RWPE1 (cell line): ENCODE measurements at regions of chr7 and their contacts with region 1.

Region 1: DNA sequence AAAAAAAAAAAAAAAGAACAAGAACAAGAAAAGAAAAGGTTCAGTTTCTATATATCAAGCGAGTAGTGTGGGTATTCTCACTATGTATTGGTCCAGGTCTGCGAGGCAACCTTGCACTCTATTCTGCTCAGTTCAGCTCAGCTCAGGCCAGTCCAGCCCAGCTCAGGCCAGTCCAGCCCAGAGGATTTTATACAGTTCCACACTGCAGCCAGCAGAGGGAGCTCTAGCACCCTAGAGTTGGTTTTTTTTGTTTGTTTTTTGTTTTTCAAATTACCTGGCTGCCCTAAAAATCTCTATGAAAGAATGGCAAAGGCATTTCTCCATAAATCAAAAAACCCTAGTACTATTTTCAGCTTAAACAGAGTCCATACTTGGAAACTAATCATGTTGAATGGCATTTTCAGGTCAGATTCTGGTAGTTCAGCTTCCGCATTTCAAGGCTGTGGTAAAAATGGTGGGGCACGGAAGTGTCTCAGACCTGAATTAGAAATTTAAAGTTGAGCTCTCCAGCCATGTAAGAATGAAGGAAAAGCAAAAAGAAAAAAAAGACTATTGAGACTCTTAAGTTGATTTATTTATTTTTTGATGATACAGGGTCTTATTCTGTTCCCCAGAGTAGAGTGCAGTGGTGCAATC is 55.2 kb upstream of the GSDME start:
- DNase-seq: peak; percentile 60
- H3K27ac ChIP-seq: no peak overlapping the region
- CTCF ChIP-seq: peak; percentile 96

Region 2: DNA sequence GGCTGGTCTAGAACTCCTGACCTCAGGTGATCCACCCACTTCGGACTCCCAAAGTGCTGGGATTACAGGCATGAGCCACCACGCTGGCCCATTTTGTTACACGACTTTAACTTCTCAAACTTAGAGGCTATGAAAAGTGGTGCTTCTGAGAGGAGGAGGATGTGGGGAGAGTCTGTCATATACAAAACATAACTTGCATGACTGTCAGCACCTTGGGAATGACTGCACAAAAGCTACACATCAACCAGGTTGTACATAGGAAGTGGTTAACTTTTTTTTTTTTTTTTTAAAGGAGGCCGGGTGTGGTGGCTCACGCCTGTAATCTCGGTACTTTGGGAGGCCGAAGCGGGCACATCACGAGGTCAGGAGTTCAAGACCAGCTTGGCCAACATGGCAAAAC is 11.8 kb before region 1 on chr7:
- CTCF ChIA-PET with region 1: interaction called, 10 read pairs
- POLR2A ChIA-PET with region 1: no interaction called
- DNase-seq: no peak
- H3K27ac ChIP-seq: no peak overlapping the region
- CTCF ChIP-seq: no peak

Region 3: GRCh38 chr7:25069900-25070443 is 257.5 kb after region 1 on chr7:
- CTCF ChIA-PET with region 1: interaction called, 20 read pairs
- POLR2A ChIA-PET with region 1: no interaction called
- DNase-seq: peak; percentile 84
- H3K27ac ChIP-seq: peak overlapping the region; percentile 51
- CTCF ChIP-seq: peak; percentile 93

Region 4: DNA sequence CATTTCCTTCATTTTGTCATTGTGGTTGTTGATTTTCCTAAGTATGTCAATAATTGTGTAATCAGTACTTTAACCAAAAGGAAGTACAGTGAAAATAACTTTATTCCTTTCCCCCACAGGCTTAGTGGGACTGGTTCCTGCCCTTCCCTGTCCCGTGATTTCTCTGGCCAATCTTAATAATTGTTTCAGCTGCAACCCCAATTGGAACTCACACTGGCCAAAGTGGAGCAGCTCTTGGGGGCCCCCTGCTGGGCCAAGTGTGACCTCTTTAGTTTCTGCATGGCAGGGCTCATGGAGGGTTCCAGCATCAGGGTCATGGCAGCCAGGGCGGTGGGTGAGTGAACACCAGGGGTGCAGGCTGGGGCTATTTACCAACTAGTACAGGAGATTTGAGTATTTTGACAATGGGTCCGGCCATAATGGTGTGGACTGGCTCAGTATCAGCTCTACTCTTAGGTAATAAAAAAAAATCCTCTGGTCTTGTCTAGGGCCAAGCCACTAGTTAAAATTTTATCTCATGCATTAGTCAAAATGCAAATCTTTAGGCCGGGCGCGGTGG is 280.9 kb after region 1 on chr7:
- CTCF ChIA-PET with region 1: interaction called, 28 read pairs
- POLR2A ChIA-PET with region 1: no interaction called
- DNase-seq: peak; percentile 77
- H3K27ac ChIP-seq: peak overlapping the region; percentile 42
- CTCF ChIP-seq: peak; percentile 89

Region 5: GRCh38 chr7:25098096-25099046 is 285.9 kb after region 1 on chr7:
- CTCF ChIA-PET with region 1: interaction called, 28 read pairs
- POLR2A ChIA-PET with region 1: no interaction called
- DNase-seq: peak; percentile 84
- H3K27ac ChIP-seq: no peak overlapping the region
- CTCF ChIP-seq: peak; percentile 99